ENCODE measurements at regions of chr11 and their contacts with region 1.

Region 1: DNA sequence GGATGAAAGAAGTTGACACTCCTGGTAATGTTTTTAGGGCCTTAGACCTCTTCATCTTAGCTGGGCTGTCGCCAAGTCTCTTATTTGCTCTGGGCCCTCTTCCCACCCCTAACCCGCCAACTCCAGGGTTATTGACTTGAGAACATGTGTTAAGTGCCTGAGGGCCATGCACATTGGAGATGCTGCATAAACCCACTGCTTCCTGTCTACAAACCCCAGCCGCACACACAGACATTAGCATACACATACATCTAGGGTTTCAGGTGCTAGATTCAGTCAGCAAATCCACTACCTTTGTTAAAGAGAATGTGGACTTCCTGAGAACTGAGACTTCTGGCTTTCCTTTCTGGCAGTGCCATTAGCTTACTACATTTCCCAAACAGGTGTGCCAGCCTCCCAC is 817 bp downstream of the PANX3 start:
- DNase-seq: no peak
- H3K4me3 ChIP-seq: no peak overlapping the region
- H3K27ac ChIP-seq: no peak overlapping the region
- H3K4me1 ChIP-seq: no peaks in the 10 kb centered on the region
- H3K27me3 ChIP-seq: peaks cover 0 to 6% of the 10 kb centered on the region in 2 experiments
- CTCF ChIP-seq: no peak
- POLR2A ChIP-seq: no peak

Region 2: GRCh38 chr11:124577716-124578427 is 34.2 kb before region 1 on chr11:
- CTCF ChIA-PET with region 1: no interaction called
- POLR2A ChIA-PET with region 1: no interaction called
- dilution Hi-C with region 1: no loop called
- intact Hi-C with region 1: loop called (anchors 1 kb)
- DNase-seq: no peak
- H3K4me3 ChIP-seq: no peak overlapping the region
- H3K27ac ChIP-seq: no peak overlapping the region
- H3K4me1 ChIP-seq: no peaks in the 10 kb centered on the region
- H3K27me3 ChIP-seq: peaks cover 2 to 8% of the 10 kb centered on the region in 2 experiments
- CTCF ChIP-seq: no peak
- POLR2A ChIP-seq: no peak